Common myeloid progenitor, CD34-positive (primary cell): ENCODE measurements at regions of chr3 and their contacts with region 1.

Region 1: GRCh38 chr3:112582244-112582874 is 20.5 kb downstream of the SLC35A5 start:
- DNase-seq: peak; percentile 59 to 82 (median 77)
- H3K4me3 ChIP-seq: no peak overlapping the region
- H3K27ac ChIP-seq: no peak overlapping the region
- H3K4me1 ChIP-seq: peaks cover 0 to 13% (median 5%) of the 10 kb centered on the region in 4 experiments
- H3K27me3 ChIP-seq: no peaks in the 10 kb centered on the region

Region 2: GRCh38 chr3:112261742-112262141 is 320.6 kb before region 1 on chr3:
- CTCF ChIA-PET with region 1: no interaction called
- POLR2A ChIA-PET with region 1: no interaction called
- DNase-seq: peak; percentile 12 to 53 (median 44)
- H3K4me3 ChIP-seq: no peak overlapping the region
- H3K27ac ChIP-seq: no peak overlapping the region
- H3K4me1 ChIP-seq: peaks cover 0 to 8% (median 2%) of the 10 kb centered on the region in 4 experiments
- H3K27me3 ChIP-seq: no peaks in the 10 kb centered on the region

Region 3: GRCh38 chr3:112425858-112426750 is 156.3 kb before region 1 on chr3:
- CTCF ChIA-PET with region 1: no interaction called
- POLR2A ChIA-PET with region 1: no interaction called
- DNase-seq: peak in 1 of 3 donors; percentile 27
- H3K4me3 ChIP-seq: no peak overlapping the region
- H3K27ac ChIP-seq: no peak overlapping the region
- H3K4me1 ChIP-seq: peaks cover 5 to 17% (median 6%) of the 10 kb centered on the region in 4 experiments
- H3K27me3 ChIP-seq: no peaks in the 10 kb centered on the region

Region 4: GRCh38 chr3:112561731-112562688 is 20.3 kb before region 1 on chr3 and contains the starts of genes ATG3 and SLC35A5:
- CTCF ChIA-PET with region 1: interaction called, 10 read pairs
- POLR2A ChIA-PET with region 1: no interaction called
- DNase-seq: peak; percentile 98 to 99 (median 99)
- H3K4me3 ChIP-seq: peak within 1 kb of the TSS; percentile 86 to 100 (median 95)
- H3K27ac ChIP-seq: peak within 1 kb of the TSS; percentile 91 to 95
- H3K4me1 ChIP-seq: peaks cover 12 to 38% (median 31%) of the 10 kb centered on the region in 4 experiments
- H3K27me3 ChIP-seq: no peaks in the 10 kb centered on the region

Region 5: GRCh38 chr3:112568642-112569041 is 13.7 kb before region 1 on chr3:
- CTCF ChIA-PET with region 1: interaction called, 10 read pairs
- POLR2A ChIA-PET with region 1: no interaction called
- DNase-seq: no peak
- H3K4me3 ChIP-seq: no peak overlapping the region
- H3K27ac ChIP-seq: no peak overlapping the region
- H3K4me1 ChIP-seq: peaks cover 0 to 19% (median 16%) of the 10 kb centered on the region in 4 experiments
- H3K27me3 ChIP-seq: no peaks in the 10 kb centered on the region

Region 6: GRCh38 chr3:112642912-112643506 is 60.6 kb after region 1 on chr3:
- CTCF ChIA-PET with region 1: interaction called, 22 read pairs
- POLR2A ChIA-PET with region 1: no interaction called
- DNase-seq: peak; percentile 81 to 92 (median 90)
- H3K4me3 ChIP-seq: peak overlapping the region in 2 of 7 experiments; percentile 13 to 61
- H3K27ac ChIP-seq: no peak overlapping the region
- H3K4me1 ChIP-seq: peaks cover 0 to 5% (median 3%) of the 10 kb centered on the region in 4 experiments
- H3K27me3 ChIP-seq: peaks cover 0 to 16% (median 6%) of the 10 kb centered on the region in 5 experiments